Heart right ventricle (tissue), 16 donors: ENCODE measurements at regions of chrX and their contacts with region 1.

Region 1: GRCh38 chrX:98924511-98924910 is 1485.6 kb downstream of the PCDH19 start:
- DNase-seq: no peak
- ATAC-seq: no peak
- H3K4me3 ChIP-seq: no peak overlapping the region
- H3K27ac ChIP-seq: no peak overlapping the region
- H3K4me1 ChIP-seq: no peaks in the 10 kb centered on the region
- H3K27me3 ChIP-seq: no peaks in the 10 kb centered on the region
- CTCF ChIP-seq: no peak

Region 2: GRCh38 chrX:98962996-98963395 is 38.5 kb after region 1 on chrX:
- intact Hi-C with region 1: loop called in 1 of 10 experiments (anchors 1 kb)
- DNase-seq: no peak
- ATAC-seq: no peak
- H3K4me3 ChIP-seq: no peak overlapping the region
- H3K27ac ChIP-seq: no peak overlapping the region
- H3K4me1 ChIP-seq: no peaks in the 10 kb centered on the region
- H3K27me3 ChIP-seq: peaks cover 0 to 9% (median 0%) of the 10 kb centered on the region in 7 donors
- CTCF ChIP-seq: no peak